Gastrocnemius medialis (tissue), 4 donors: ENCODE measurements at regions of chr18 and their contacts with region 1.

Region 1: DNA sequence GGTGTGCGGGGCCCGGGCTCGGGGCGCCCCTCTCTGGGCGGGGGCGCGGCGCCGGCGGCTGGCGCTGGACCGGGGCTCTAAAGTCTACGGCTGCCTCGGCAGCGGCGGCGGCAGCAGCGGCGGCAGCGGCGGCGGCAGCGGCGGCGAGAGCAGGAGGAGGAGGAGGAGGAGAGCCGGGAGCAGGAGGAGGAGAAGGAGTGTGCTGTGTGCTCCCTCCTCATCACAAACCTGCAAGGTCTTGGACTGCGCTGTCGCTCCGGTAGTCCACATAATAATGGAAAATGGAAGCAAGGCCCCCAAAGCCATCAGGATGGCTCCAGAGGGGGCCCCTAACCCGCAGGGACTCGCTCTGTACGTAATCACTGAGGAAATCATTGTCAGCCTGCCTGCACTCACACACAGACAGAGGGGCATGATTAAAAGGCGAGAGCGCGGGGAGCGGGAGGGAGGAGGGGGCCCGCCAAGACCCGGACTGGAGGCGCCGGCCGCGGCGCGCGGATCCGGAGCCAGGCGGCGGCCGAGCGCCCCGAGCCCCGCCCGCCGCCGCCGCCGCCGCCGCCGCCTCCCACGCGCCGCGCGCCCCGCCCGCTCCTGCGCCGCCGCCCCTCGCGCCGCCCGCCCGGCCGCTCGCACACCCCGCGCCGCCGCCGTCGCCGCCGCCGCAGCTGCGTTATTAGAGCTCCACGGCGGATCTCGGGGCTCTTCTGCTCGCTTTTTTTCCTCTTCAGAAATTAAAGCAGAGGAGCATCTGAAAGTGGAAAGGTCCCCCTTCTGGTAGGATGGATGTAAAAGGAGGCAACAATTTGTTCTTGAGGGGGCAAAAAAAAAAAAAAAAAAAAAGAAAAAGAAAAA is at the start of gene ZNF521:
- DNase-seq: peak; percentile 83 to 84
- ATAC-seq: peak; percentile 82 to 84
- H3K4me3 ChIP-seq: peak within 1 kb of the TSS; percentile 73 to 94 (median 84)
- H3K27ac ChIP-seq: peak within 1 kb of the TSS; percentile 87 to 91 (median 90)
- H3K4me1 ChIP-seq: peaks cover 6 to 14% of the 10 kb centered on the region in 2 donors
- H3K27me3 ChIP-seq: no peaks in the 10 kb centered on the region
- CTCF ChIP-seq: no peak
- POLR2A ChIP-seq: peak; percentile 61 to 73
- total RNA-seq, gene ZNF521: 3.5 to 15.6 (median 4.7) TPM

Region 2: DNA sequence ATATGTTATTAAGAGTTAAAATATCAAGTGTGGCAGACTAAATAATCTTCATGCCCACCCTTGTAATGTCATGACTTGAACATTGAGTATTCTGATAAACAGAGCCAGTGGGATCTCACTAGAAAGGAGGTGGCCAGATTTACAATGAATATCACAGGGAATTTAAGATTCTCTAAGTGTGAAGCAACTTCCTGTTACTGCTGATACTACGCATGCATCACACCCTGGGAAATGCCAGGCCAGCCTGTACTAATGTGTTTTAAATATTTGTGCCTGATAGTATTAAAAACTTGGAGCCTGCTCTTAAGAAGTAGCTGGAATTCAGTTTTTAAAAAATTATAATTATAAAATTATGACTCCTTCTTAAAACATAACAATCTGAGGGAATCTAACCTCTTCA is 1514.4 kb before region 1 on chr18:
- in situ Hi-C with region 1: no loop called
- intact Hi-C with region 1: loop called (anchors 5 kb)
- DNase-seq: no peak
- ATAC-seq: no peak
- H3K4me3 ChIP-seq: no peak overlapping the region
- H3K27ac ChIP-seq: no peak overlapping the region
- H3K4me1 ChIP-seq: no peaks in the 10 kb centered on the region
- H3K27me3 ChIP-seq: no peaks in the 10 kb centered on the region
- CTCF ChIP-seq: no peak
- POLR2A ChIP-seq: no peak

Region 3: DNA sequence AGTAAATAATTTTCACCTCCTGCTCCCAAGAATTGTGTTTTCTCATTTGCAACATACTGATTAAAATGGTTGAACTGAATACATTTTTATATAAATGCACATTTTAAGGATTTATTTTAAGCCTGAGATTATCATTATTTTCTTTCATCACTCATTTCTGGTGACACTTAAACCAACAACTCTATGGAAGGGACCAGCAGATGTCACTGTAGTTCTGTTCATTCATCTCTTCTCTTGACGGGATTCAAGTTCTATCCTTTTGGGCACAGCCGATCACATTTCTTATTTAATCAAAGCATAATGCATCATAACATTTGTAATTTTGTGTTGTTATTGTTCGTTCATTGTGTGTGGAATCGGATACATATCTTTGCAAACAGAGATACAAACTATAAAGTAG is 473.7 kb before region 1 on chr18:
- in situ Hi-C with region 1: no loop called
- intact Hi-C with region 1: loop called (anchors 10 kb)
- DNase-seq: no peak
- ATAC-seq: peak in 1 of 2 donors; percentile 50
- H3K4me3 ChIP-seq: no peak overlapping the region
- H3K27ac ChIP-seq: no peak overlapping the region
- H3K4me1 ChIP-seq: no peaks in the 10 kb centered on the region
- H3K27me3 ChIP-seq: no peaks in the 10 kb centered on the region
- CTCF ChIP-seq: peak; percentile 30 to 56 (median 55)
- POLR2A ChIP-seq: no peak

Region 4: DNA sequence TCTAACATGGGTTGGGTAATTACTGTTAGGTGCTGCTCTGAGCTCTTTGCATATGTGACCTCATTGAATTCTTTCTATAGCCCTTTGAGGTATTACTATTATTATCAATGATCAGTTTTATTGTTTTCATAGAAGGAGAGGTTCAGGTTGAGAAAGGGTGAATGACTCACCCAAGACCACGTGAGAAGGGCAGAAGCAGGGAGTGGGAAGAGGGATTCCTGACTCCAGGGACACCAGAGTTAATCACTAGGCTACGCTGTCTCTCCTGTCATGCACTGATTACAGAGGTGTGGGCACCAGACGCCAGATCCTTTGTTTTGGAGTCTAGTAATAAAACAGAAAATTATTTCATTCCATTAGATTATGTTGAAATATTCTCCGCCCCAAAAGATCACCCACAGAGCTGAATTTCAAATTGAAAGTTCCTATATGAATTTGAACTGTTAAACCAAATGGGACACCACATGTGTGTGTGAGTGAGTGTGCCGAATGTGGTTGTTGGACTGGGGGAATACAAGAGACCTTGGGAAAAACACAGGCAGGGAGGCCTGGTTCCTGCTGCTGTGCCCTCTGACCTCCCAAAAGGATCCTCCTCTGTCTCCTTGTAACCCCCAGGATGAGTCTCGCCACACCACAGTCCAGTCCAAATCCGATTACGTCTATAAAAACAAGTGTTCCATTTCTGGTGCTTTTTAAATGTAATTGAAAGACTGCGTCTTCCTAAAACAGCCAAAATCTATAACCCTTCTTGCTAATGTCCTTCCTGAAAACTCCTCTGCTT is 215.4 kb before region 1 on chr18:
- in situ Hi-C with region 1: no loop called
- intact Hi-C with region 1: loop called (anchors 10 kb)
- DNase-seq: no peak
- ATAC-seq: no peak
- H3K4me3 ChIP-seq: no peak overlapping the region
- H3K27ac ChIP-seq: peak overlapping the region in 2 of 4 donors; percentile 15 to 26
- H3K4me1 ChIP-seq: peaks cover 32 to 36% of the 10 kb centered on the region in 2 donors
- H3K27me3 ChIP-seq: no peaks in the 10 kb centered on the region
- CTCF ChIP-seq: no peak
- POLR2A ChIP-seq: no peak

Region 5: DNA sequence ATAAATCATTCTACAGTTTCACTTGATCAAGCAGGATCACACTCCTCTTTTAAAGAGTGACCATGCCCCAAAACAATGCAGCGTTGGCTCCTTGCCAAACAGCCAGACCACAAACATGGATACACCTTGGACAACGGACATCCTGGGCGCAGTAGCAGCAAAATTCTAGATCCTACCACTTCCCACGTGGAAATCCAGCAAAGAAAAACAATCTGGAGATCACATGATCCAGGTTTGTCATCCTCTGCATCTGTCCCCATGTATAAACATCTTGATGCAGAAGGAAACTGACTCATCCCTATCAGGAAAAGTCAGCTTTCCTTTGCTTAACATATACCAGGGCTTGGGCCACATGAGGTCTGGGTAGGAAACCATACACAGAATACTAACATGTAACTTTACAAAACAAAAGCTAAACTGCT is 53.1 kb before region 1 on chr18:
- in situ Hi-C with region 1: no loop called
- intact Hi-C with region 1: loop called (anchors 2 kb)
- DNase-seq: peak; percentile 55 to 64
- ATAC-seq: peak; percentile 88 to 98
- H3K4me3 ChIP-seq: no peak overlapping the region
- H3K27ac ChIP-seq: peak overlapping the region; percentile 63 to 73 (median 70)
- H3K4me1 ChIP-seq: peaks cover 23 to 24% of the 10 kb centered on the region in 2 donors
- H3K27me3 ChIP-seq: no peaks in the 10 kb centered on the region
- CTCF ChIP-seq: no peak
- POLR2A ChIP-seq: no peak

Region 6: GRCh38 chr18:25517881-25518715 is 166.1 kb after region 1 on chr18:
- in situ Hi-C with region 1: no loop called
- intact Hi-C with region 1: no loop called
- DNase-seq: no peak
- ATAC-seq: no peak
- H3K4me3 ChIP-seq: no peak overlapping the region
- H3K27ac ChIP-seq: no peak overlapping the region
- H3K4me1 ChIP-seq: peaks cover 12 to 13% of the 10 kb centered on the region in 2 donors
- H3K27me3 ChIP-seq: no peaks in the 10 kb centered on the region
- CTCF ChIP-seq: no peak
- POLR2A ChIP-seq: no peak

Region 7: DNA sequence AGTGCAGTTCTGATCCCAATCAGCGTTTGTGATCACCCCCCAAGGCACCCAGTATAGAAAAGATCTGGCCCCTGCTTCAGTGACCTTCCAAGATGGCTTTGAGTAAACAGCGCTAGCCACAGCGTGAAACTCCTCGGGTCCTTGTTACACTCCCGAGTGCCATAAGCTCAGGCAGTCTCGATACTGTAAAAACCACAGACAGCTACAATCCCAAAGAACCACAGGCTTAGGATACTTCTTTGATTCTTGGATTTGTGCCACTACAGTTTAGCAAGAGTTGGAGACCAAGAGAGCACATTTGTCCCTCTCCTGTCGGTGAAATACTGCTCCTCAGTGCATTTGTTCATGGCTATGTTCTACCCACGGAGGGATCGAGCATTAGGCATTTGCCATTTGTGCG is 352.5 kb after region 1 on chr18:
- in situ Hi-C with region 1: no loop called
- intact Hi-C with region 1: no loop called
- DNase-seq: no peak
- ATAC-seq: no peak
- H3K4me3 ChIP-seq: no peak overlapping the region
- H3K27ac ChIP-seq: no peak overlapping the region
- H3K4me1 ChIP-seq: no peaks in the 10 kb centered on the region
- H3K27me3 ChIP-seq: no peaks in the 10 kb centered on the region
- CTCF ChIP-seq: no peak
- POLR2A ChIP-seq: no peak